HepG2 (cell line): ENCODE measurements at regions of chr10 and their contacts with region 1.

Region 1: GRCh38 chr10:79093658-79094411 is 25.1 kb downstream of the ZMIZ1 start:
- DNase-seq: peak; percentile 97
- ATAC-seq: peak; percentile 95
- H3K4me3 ChIP-seq: peak overlapping the region; percentile 11 to 60 (median 23); a peak in 4 of 6 replicates
- H3K27ac ChIP-seq: peak overlapping the region; percentile 91
- H3K4me1 ChIP-seq: peaks cover 94% of the 10 kb centered on the region
- H3K27me3 ChIP-seq: no peaks in the 10 kb centered on the region
- CTCF ChIP-seq: no peak
- EP300 ChIP-seq: peak; percentile 71 to 82; a peak in 3 of 4 replicates
- POLR2A ChIP-seq: peak in 1 of 2 experiments; percentile 46; a peak in 2 of 4 replicates
- RAD21 ChIP-seq: no peak; the same call in 1 of the 2 replicates

Region 2: DNA sequence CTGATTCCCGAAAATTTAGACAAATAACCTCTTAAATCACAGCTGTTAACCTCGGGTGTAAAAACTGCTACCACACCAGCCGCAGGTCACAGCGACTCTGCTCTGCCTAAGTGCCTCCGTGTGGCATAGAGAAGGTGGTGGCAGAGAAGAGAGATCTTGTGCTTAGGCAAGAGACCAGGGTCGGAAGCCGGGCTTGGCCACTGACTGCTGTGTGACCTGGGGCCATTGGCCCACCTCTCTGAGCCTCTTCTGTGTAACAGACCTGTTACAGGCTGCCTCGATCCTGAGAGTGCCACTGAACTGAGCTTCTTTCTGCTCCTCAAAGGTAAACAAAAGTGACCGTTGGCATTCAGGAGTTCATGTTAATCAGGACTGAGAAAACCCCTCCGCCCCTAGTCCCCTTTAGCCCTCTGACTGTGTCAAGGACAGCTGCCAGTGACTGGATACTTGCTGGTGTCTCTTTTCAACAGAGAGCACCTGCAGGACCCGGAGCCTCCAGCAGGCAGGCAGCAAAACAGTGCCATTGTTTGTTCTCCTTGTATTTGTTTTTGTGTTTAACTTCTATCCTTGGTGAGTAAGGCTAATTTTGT is 11.4 kb after region 1 on chr10:
- CTCF ChIA-PET with region 1: no interaction called
- POLR2A ChIA-PET with region 1: interaction called, 13 read pairs
- in situ Hi-C with region 1: no loop called
- intact Hi-C with region 1: loop called (anchors 1 kb)
- DNase-seq: peak; percentile 90
- ATAC-seq: peak; percentile 93
- H3K4me3 ChIP-seq: no peak overlapping the region; a peak in 1 of 6 replicates
- H3K27ac ChIP-seq: peak overlapping the region; percentile 69
- H3K4me1 ChIP-seq: peaks cover 88% of the 10 kb centered on the region
- H3K27me3 ChIP-seq: no peaks in the 10 kb centered on the region
- CTCF ChIP-seq: peak; percentile 28
- EP300 ChIP-seq: peak in 1 of 2 experiments; percentile 58; a peak in 2 of 4 replicates
- POLR2A ChIP-seq: no peak
- RAD21 ChIP-seq: peak; percentile 37; the same call in 1 of the 2 replicates

Region 3: GRCh38 chr10:79127151-79127961 is 33.5 kb after region 1 on chr10:
- CTCF ChIA-PET with region 1: no interaction called
- POLR2A ChIA-PET with region 1: no interaction called
- in situ Hi-C with region 1: no loop called
- intact Hi-C with region 1: loop called (anchors 5 kb)
- DNase-seq: peak; percentile 92
- ATAC-seq: peak; percentile 95
- H3K4me3 ChIP-seq: no peak overlapping the region
- H3K27ac ChIP-seq: peak overlapping the region; percentile 51
- H3K4me1 ChIP-seq: peaks cover 73% of the 10 kb centered on the region
- H3K27me3 ChIP-seq: no peaks in the 10 kb centered on the region
- CTCF ChIP-seq: peak; percentile 63
- EP300 ChIP-seq: peak in 1 of 2 experiments; percentile 71; a peak in 2 of 4 replicates
- POLR2A ChIP-seq: no peak
- RAD21 ChIP-seq: peak; percentile 72